Calu3 (cell line): ENCODE measurements at regions of chr11 and their contacts with region 1.

Region 1: GRCh38 chr11:69296890-69297786 is 3.2 kb downstream of the MYEOV start:
- DNase-seq: peak; percentile 98
- H3K4me3 Mint-ChIP-seq: peak overlapping the region; percentile 97
- H3K27ac Mint-ChIP-seq: peak overlapping the region; percentile 98
- H3K4me1 Mint-ChIP-seq: peaks cover 76% of the 10 kb centered on the region
- H3K27me3 Mint-ChIP-seq: no peaks in the 10 kb centered on the region
- CTCF ChIP-seq: no peak

Region 2: DNA sequence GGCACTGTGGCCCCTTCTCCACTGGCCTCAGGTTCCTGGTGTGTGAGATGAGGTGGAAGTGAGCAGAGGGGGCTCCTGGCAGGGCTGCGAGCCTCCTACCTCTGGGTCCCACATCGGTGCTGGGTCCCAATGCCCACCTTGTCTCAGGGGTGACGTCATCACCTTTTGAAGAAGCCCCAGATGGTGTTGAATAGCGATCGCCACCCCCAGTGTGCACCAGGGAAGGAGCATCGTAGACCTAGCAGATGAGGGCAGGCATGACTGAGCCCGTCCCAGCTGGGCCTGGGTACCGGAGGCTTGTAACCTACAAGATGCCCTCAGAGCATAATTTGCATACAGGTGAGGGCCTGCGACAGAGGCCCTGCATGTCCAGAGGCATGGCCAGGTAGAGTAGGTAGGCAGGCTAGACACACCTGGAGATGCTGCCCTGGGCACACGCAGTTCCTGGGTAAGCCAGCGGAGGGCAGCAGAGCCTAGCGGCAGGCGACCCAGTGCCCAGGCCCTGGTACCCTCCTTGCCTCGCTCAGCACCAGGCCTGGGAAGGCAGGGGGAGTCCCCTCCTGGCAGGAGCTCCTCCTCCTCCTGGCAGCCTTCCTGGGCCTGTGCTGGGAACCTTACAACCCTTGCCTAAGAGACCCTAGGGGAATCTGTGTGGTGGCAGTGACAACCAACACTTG is 195.9 kb before region 1 on chr11:
- CTCF ChIA-PET with region 1: interaction called, 17 read pairs
- intact Hi-C with region 1: no loop called
- DNase-seq: peak; percentile 93
- H3K4me3 Mint-ChIP-seq: no peak overlapping the region
- H3K27ac Mint-ChIP-seq: no peak overlapping the region
- H3K4me1 Mint-ChIP-seq: peaks cover 26% of the 10 kb centered on the region
- H3K27me3 Mint-ChIP-seq: no peaks in the 10 kb centered on the region
- CTCF ChIP-seq: peak; percentile 99

Region 3: GRCh38 chr11:69122642-69123431 is 174.3 kb before region 1 on chr11:
- CTCF ChIA-PET with region 1: interaction called, 6 read pairs
- intact Hi-C with region 1: loop called (anchors 1 kb)
- DNase-seq: peak; percentile 96
- H3K4me3 Mint-ChIP-seq: peak overlapping the region; percentile 53
- H3K27ac Mint-ChIP-seq: peak overlapping the region; percentile 93
- H3K4me1 Mint-ChIP-seq: peaks cover 20% of the 10 kb centered on the region
- H3K27me3 Mint-ChIP-seq: no peaks in the 10 kb centered on the region
- CTCF ChIP-seq: no peak

Region 4: GRCh38 chr11:69131644-69132300 is 165.4 kb before region 1 on chr11:
- CTCF ChIA-PET with region 1: interaction called, 22 read pairs
- intact Hi-C with region 1: no loop called
- DNase-seq: peak; percentile 91
- H3K4me3 Mint-ChIP-seq: no peak overlapping the region
- H3K27ac Mint-ChIP-seq: no peak overlapping the region
- H3K4me1 Mint-ChIP-seq: peaks cover 26% of the 10 kb centered on the region
- H3K27me3 Mint-ChIP-seq: no peaks in the 10 kb centered on the region
- CTCF ChIP-seq: peak; percentile 95

Region 5: DNA sequence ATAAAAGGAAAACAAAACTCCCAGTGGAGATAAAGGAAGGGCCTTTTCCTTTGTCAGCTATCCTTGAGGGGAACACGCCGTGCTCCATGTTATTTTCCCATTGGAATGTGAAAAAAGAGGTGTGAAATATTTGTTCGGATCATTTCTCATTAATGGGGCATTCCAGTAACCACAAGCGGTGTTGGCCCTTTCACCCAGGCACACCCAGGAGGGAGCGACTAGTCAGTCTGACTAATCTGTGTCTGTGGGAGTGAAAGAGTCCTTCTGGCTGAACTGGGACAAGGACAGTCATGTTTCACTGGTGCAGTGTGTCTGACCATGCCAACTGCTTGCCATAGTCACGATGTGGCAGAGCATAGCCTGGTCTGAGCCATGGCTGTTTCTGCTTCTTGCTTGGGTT is 16.1 kb before region 1 on chr11:
- CTCF ChIA-PET with region 1: interaction called, 12 read pairs
- intact Hi-C with region 1: no loop called
- DNase-seq: peak; percentile 79
- H3K4me3 Mint-ChIP-seq: no peak overlapping the region
- H3K27ac Mint-ChIP-seq: no peak overlapping the region
- H3K4me1 Mint-ChIP-seq: peaks cover 20% of the 10 kb centered on the region
- H3K27me3 Mint-ChIP-seq: no peaks in the 10 kb centered on the region
- CTCF ChIP-seq: no peak

Region 6: DNA sequence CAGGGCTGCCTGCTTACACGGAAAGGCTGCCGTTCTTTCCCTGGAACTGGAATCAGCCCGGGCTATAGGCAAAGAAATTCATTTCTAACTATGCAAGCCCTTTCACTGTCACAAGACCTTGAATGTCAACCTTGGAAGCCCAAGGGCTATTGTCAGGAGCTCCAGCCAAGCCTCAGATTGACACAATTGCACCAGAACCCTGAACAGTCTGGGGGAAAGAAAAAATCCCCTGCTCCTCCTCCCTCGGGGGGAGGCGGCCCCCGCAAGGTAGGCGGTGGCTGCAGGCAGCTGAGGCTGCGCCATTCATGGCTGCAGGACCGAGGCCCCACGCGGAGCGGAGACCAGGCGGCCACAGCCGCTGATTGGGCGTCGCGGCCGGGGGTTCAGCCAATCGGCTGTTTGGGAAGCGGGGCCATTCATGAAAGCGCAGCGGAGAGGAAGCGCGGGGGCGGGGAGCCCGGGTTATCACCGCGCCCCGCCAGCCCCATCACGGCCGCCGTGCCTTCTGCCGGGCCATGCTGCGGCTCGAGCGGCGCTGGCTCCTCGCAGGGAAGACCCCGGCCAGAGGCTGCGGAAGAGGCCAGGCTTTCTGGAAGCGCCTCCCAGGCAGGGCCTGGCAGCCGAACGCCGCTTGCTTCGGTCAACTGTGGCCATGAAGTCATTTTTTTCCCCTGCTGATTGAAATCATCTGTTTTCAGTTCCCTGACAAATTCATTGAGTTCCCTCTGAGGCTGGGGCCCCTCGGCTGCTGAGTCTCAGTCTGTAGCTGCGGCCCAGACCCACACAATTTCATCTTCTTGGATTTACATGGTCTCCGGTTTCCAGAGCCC is 146.2 kb after region 1 on chr11:
- CTCF ChIA-PET with region 1: no interaction called
- intact Hi-C with region 1: loop called (anchors 5 kb)
- DNase-seq: peak; percentile 83
- H3K4me3 Mint-ChIP-seq: peak overlapping the region; percentile 39
- H3K27ac Mint-ChIP-seq: peak overlapping the region; percentile 54
- H3K4me1 Mint-ChIP-seq: peaks cover 48% of the 10 kb centered on the region
- H3K27me3 Mint-ChIP-seq: no peaks in the 10 kb centered on the region
- CTCF ChIP-seq: no peak

Region 7: DNA sequence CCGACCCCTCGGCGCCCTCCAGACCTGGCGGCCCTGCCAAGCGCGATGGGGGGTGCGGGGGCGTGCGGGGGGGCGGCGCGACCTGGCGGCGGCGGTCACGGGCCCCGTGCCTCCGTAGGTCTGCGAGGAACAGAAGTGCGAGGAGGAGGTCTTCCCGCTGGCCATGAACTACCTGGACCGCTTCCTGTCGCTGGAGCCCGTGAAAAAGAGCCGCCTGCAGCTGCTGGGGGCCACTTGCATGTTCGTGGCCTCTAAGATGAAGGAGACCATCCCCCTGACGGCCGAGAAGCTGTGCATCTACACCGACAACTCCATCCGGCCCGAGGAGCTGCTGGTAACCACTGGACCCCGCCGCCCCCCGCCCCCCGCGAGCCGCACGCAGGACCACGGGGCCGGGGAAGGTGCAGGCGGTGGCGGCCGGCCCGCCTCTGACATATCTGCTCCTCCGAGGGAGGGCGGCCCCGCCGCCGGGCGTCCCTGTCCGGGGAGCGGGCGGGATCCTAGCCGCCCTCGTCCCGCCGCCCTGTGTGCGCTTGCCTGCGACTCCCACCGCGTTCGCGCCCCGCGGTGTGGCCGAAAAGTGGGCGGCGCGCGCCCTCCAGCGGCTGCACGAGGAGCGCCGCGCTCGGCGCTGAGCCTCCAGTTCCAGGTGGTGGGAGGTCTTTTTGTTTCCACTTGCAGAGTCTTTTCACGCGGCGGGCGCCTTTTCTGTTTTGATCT is 345.9 kb after region 1 on chr11:
- CTCF ChIA-PET with region 1: interaction called, 11 read pairs
- intact Hi-C with region 1: loop called (anchors 1 kb)
- DNase-seq: peak; percentile 84
- H3K4me3 Mint-ChIP-seq: peak overlapping the region; percentile 88
- H3K27ac Mint-ChIP-seq: peak overlapping the region; percentile 89
- H3K4me1 Mint-ChIP-seq: peaks cover 8% of the 10 kb centered on the region
- H3K27me3 Mint-ChIP-seq: no peaks in the 10 kb centered on the region
- CTCF ChIP-seq: peak; percentile 92

Region 8: GRCh38 chr11:69664103-69664775 is 367.1 kb after region 1 on chr11:
- CTCF ChIA-PET with region 1: no interaction called
- intact Hi-C with region 1: no loop called
- DNase-seq: no peak
- H3K4me3 Mint-ChIP-seq: no peak overlapping the region
- H3K27ac Mint-ChIP-seq: no peak overlapping the region
- H3K4me1 Mint-ChIP-seq: no peaks in the 10 kb centered on the region
- H3K27me3 Mint-ChIP-seq: no peaks in the 10 kb centered on the region
- CTCF ChIP-seq: no peak